ENCODE measurements at regions of chr3 and their contacts with region 1.

Region 1: DNA sequence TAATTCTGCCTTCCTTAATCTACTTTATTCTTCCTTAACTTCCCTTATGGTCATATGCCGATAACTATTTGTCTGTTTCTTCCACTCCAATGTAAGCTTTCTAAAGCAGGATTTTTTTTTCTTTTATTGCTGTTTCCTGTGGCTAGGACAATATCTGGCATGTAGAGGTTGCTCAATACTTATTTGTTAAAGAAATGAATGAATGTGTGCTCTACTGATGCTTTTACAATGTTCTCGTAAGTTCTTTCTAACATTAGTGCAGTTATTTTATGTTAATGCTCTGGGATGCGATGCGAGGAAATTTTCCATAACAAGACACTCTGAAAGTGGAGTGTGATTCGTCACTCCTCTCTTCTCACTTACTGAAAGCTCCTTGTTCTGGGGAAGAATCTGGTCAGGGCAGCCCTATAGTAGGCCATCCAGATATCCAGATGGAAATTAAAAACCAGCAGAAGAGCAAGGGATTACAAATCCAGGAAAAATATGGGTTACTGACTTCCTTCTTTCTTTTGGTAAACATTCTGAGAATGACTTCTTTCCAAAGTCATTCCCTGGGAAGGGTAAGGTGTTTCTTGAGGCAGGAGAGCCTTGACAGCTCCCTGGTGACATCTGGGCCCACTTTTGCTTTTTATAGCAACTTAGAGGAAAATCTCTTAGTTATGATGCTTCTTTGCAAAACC is 420.4 kb downstream of the PDCD6IP start:
- DNase-seq: no peak
- ATAC-seq: no peak
- H3K4me3 ChIP-seq: no peak overlapping the region
- H3K4me3 Mint-ChIP-seq: no peak overlapping the region
- H3K27ac ChIP-seq: no peak overlapping the region
- H3K27ac Mint-ChIP-seq: no peak overlapping the region
- H3K4me1 ChIP-seq: peaks cover 0 to 10% of the 10 kb centered on the region in 2 donors
- H3K4me1 Mint-ChIP-seq: peaks cover 35% of the 10 kb centered on the region
- H3K27me3 ChIP-seq: no peaks in the 10 kb centered on the region
- H3K27me3 Mint-ChIP-seq: no peaks in the 10 kb centered on the region
- CTCF ChIP-seq: no peak

Region 2: DNA sequence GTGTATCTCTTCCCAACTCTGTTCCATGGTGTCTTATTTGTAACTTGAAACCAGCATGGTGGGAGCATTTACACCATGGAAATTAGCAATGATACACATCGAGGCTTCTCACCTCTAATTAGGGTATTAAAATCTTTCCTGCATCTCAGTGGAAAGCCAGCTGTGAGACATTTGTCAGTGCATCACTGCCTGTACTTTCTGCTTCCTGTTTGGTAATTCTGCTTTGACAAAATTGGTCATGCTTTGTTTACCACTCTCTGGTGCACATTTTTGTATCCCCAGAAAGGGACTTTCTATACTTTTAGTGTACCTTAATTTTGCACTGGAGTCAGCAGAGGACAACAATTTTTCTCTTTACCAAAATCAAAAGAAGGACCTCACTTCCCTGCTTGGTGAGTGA is 18.3 kb before region 1 on chr3:
- CTCF ChIA-PET with region 1: no interaction called
- POLR2A ChIA-PET with region 1: interaction called, 10 read pairs
- intact Hi-C with region 1: no loop called
- DNase-seq: peak; percentile 73
- ATAC-seq: peak; percentile 79
- H3K4me3 ChIP-seq: peak overlapping the region in 4 of 5 experiments; percentile 23 to 44 (median 31)
- H3K4me3 Mint-ChIP-seq: peak overlapping the region; percentile 82
- H3K27ac ChIP-seq: peak overlapping the region; percentile 87 to 97
- H3K27ac Mint-ChIP-seq: peak overlapping the region; percentile 96
- H3K4me1 ChIP-seq: peaks cover 54% of the 10 kb centered on the region in 2 donors
- H3K4me1 Mint-ChIP-seq: peaks cover 78% of the 10 kb centered on the region
- H3K27me3 ChIP-seq: no peaks in the 10 kb centered on the region
- H3K27me3 Mint-ChIP-seq: no peaks in the 10 kb centered on the region
- CTCF ChIP-seq: no peak

Region 3: GRCh38 chr3:34237946-34238345 is 19.1 kb after region 1 on chr3:
- CTCF ChIA-PET with region 1: no interaction called
- POLR2A ChIA-PET with region 1: no interaction called
- intact Hi-C with region 1: no loop called
- DNase-seq: no peak
- ATAC-seq: no peak
- H3K4me3 ChIP-seq: no peak overlapping the region
- H3K4me3 Mint-ChIP-seq: no peak overlapping the region
- H3K27ac ChIP-seq: no peak overlapping the region
- H3K27ac Mint-ChIP-seq: no peak overlapping the region
- H3K4me1 ChIP-seq: no peaks in the 10 kb centered on the region
- H3K4me1 Mint-ChIP-seq: peaks cover 2% of the 10 kb centered on the region
- H3K27me3 ChIP-seq: no peaks in the 10 kb centered on the region
- H3K27me3 Mint-ChIP-seq: no peaks in the 10 kb centered on the region
- CTCF ChIP-seq: no peak

Region 4: DNA sequence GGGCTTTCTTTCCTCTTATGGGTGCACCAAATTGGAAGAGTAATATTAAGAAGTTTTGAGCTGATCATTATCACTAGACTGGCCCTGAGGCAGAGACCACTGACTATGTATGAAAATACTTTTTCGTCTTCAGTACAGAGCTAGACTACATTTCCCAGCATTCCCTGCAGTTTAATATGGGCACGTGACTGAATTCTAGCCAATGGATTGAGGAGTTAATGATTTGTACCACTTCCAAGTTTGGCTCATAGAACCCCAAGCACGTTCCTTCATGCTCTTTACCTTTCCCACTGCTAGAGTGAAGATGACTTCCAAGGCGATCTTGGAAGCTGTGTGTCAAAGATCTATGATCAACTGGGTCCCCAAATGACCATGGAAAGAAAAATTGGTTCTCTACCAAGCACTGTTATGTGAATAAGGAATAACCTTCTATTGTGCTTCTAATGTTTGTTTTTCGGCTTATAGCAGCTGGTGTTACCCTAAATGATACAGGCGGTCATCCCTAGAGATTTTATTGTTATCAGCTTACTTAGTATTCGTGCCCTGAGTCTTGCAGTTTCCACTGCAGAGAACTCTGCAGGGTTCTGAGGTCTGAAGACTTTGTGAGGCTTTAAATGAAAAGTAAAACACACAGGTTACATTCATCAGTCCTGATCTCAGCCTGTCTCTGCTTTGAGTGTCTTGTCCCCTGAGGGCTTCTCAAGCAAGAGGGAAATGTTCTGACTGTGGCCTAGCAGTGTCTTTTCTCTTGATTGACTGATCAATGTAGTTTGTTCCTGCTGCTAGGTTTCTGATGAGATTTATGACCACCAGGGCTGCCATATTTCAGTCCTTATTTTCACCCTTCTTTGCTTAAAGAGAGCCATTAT is 66.3 kb after region 1 on chr3:
- CTCF ChIA-PET with region 1: no interaction called
- POLR2A ChIA-PET with region 1: no interaction called
- intact Hi-C with region 1: no loop called
- DNase-seq: no peak
- ATAC-seq: no peak
- H3K4me3 ChIP-seq: no peak overlapping the region
- H3K4me3 Mint-ChIP-seq: no peak overlapping the region
- H3K27ac ChIP-seq: no peak overlapping the region
- H3K27ac Mint-ChIP-seq: no peak overlapping the region
- H3K4me1 ChIP-seq: no peaks in the 10 kb centered on the region
- H3K4me1 Mint-ChIP-seq: no peaks in the 10 kb centered on the region
- H3K27me3 ChIP-seq: no peaks in the 10 kb centered on the region
- H3K27me3 Mint-ChIP-seq: no peaks in the 10 kb centered on the region
- CTCF ChIP-seq: no peak

Region 5: DNA sequence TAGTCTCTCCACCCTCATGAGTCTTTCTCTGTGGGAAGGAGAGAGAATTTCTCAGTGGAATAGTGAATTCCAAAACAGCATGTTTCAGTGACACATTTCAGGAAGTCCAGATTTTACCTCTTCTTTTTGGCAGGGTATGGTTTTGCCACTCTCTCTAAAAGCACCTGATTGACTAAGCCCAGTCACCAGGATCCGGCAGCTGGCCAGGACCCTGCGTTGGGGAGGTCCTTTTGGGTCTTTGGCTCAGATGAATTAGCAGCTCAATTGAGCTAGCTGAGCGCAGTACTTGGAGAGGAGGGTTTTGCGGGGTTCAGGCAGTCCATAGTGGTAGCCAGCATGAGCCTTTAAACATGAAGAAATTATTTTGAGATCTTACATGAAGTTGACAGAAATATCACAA is 127.8 kb after region 1 on chr3:
- CTCF ChIA-PET with region 1: no interaction called
- POLR2A ChIA-PET with region 1: no interaction called
- intact Hi-C with region 1: no loop called
- DNase-seq: no peak
- ATAC-seq: no peak
- H3K4me3 ChIP-seq: no peak overlapping the region
- H3K4me3 Mint-ChIP-seq: no peak overlapping the region
- H3K27ac ChIP-seq: no peak overlapping the region
- H3K27ac Mint-ChIP-seq: no peak overlapping the region
- H3K4me1 ChIP-seq: no peaks in the 10 kb centered on the region
- H3K4me1 Mint-ChIP-seq: no peaks in the 10 kb centered on the region
- H3K27me3 ChIP-seq: no peaks in the 10 kb centered on the region
- H3K27me3 Mint-ChIP-seq: peaks cover 2% of the 10 kb centered on the region
- CTCF ChIP-seq: no peak